H1 (cell line): ENCODE measurements at regions of chr9 and their contacts with region 1.

Region 1: DNA sequence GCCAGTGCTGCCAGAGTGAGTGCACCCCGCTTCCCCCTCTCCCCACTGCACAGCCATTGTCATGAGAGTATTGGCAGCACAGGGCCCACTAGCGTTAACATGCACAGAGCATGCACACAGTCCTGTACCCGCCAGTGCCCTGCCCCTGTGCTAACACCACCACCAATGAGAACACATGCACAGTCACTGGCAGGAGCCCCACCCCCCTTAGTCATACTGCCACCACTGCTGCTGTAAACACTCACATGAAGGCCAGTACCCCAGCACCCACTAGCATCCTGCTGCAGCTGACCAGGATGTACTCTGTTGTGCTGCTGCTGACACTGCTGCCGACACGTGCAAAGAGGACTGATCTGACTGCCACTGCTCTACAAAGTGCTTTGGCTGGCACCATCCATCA is 19.5 kb upstream of the RANBP6 start:
- DNase-seq: no peak
- H3K4me3 ChIP-seq: no peak overlapping the region
- H3K27ac ChIP-seq: no peak overlapping the region
- H3K4me1 ChIP-seq: no peaks in the 10 kb centered on the region; a peak in 1 of 7 replicates
- H3K27me3 ChIP-seq: no peaks in the 10 kb centered on the region
- CTCF ChIP-seq: no peak
- EP300 ChIP-seq: no peak
- POLR2A ChIP-seq: no peak
- RAD21 ChIP-seq: no peak

Region 2: DNA sequence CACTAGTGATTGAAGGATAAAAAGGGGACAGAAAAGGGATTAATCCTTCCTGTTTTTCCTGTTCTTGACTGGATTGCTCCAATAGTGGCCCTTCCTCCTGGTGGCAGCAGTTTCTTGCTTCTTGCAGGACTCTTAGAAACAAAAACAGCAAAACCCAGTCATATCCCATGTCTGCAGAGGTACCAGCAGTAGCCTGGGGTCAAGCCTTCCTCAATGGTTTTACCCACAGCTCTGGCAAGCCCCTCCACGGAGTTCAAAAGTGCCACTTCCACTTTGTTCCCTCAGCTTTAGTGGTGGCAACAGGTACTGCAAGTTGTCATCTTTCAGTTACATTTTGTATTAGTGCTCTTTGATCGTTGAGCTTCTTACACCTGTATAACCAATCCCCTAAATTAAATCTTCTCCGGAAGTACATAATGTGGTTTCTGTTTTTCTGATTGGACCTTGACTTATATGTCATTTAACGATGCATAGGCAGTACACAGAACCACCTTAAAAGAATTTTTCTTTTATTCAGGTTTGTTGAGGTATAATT is 10.9 kb before region 1 on chr9:
- CTCF ChIA-PET with region 1: interaction called, 25 read pairs
- POLR2A ChIA-PET with region 1: no interaction called
- DNase-seq: peak in 1 of 2 experiments; percentile 50
- H3K4me3 ChIP-seq: no peak overlapping the region; a peak in 1 of 8 replicates
- H3K27ac ChIP-seq: no peak overlapping the region
- H3K4me1 ChIP-seq: peaks cover 0 to 2% (median 0%) of the 10 kb centered on the region in 4 experiments; a peak in 1 of 7 replicates
- H3K27me3 ChIP-seq: no peaks in the 10 kb centered on the region
- CTCF ChIP-seq: peak in 2 of 3 experiments; percentile 21 to 59; a peak in 3 of 4 replicates
- EP300 ChIP-seq: no peak
- POLR2A ChIP-seq: no peak
- RAD21 ChIP-seq: peak; percentile 0 to 3; a peak in 1 of 4 replicates